H1 (cell line): ENCODE measurements at regions of chr14 and their contacts with region 1.

Region 1: DNA sequence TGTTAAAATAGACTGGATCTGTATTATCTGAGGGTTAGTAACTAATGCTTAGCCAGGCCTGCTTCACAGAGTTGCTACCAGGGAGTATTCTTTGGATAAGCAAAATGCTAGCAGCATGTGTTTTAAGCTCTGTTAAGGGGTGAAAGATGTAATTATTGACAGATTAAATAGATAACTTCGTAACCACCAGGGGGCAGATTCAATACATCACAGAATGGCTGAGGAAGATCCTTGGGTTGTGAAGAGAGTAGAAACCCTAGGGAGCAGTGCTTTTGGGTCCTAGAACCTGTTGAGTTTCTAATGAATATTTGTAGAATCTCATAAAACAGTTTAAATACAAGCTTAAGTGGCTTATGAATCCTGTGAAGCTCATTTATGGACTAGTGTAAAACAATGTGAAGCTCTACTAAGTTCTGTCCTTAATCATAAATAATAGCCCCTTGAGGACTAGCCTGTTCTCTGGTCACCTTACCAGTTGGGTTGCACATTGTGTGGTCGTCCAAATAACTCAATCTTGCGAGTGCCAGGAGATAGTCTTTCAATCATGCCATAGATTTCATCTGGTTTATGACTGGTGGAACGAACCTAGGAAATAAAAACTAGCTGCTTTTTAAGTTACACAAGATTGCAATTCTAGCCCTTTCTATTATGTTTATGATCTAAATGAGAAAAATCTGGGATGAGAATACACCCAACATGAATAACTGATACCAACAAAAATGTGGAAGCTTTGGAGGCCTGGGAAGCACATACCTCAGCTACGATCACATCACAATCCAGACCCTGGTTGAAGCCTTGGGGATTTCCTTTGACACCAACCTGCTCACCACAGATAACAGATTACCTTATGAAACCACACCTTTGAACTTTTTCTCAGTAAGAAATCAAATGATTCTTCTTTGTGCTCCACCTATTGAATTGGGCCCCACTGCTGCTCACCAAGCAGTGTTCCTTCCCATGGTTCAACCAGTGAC is 12.3 kb downstream of the METTL3 start:
- DNase-seq: peak in 1 of 2 experiments; percentile 43
- H3K4me3 ChIP-seq: no peak overlapping the region
- H3K27ac ChIP-seq: peak overlapping the region; percentile 55; the same call in 1 of the 2 replicates
- H3K4me1 ChIP-seq: peaks cover 0 to 2% (median 1%) of the 10 kb centered on the region in 4 experiments; a peak in 2 of 7 replicates
- H3K27me3 ChIP-seq: no peaks in the 10 kb centered on the region
- CTCF ChIP-seq: peak in 2 of 3 experiments; percentile 51 to 56; a peak in 3 of 4 replicates
- EP300 ChIP-seq: no peak
- POLR2A ChIP-seq: no peak
- RAD21 ChIP-seq: peak; percentile 77 to 81

Region 2: DNA sequence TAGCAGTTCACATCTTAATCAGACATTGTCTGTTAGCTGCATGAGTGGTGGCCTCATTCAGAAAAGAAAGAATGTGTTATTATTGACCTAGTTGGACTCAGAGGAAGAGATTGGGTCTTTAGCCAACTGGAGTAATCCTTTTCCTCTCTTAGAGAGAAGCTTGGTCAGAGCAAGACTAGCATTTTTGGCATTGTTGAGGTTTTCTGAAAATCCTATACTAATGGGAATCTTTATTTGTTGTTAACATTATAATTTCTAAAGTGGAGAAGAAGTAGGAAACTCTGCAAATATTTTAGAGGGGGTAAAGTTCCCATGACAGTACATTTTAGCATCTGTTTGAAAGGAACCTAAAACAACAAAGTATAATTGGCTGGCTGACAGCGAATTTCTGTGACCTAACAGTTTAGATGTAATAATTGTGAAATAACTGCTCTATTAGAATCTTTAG is 12.2 kb before region 1 on chr14:
- CTCF ChIA-PET with region 1: interaction called, 19 read pairs
- POLR2A ChIA-PET with region 1: interaction called, 15 read pairs
- DNase-seq: no peak
- H3K4me3 ChIP-seq: no peak overlapping the region
- H3K27ac ChIP-seq: no peak overlapping the region
- H3K4me1 ChIP-seq: no peaks in the 10 kb centered on the region
- H3K27me3 ChIP-seq: no peaks in the 10 kb centered on the region
- CTCF ChIP-seq: no peak
- EP300 ChIP-seq: no peak
- POLR2A ChIP-seq: no peak
- RAD21 ChIP-seq: no peak

Region 3: DNA sequence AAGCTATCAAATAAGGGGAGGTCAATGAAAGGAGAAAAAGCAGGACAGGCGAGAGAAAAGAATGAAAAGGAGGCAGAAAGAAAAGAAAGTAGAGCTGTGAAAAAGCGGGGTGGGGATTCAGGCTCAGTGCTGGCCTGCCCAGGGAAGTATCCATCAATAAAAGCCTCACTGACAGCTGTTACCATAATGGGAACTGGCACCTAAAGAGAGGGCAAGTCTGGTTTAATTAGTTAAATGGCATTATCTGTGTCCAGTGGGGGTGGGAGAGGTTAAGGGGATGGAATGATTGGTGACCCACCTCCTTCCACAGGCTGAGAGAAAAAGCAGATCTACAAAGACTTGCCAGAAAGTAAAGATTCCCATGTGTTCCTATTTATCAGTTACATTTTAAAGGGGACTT is 19.9 kb after region 1 on chr14:
- CTCF ChIA-PET with region 1: interaction called, 22 read pairs
- POLR2A ChIA-PET with region 1: interaction called, 30 read pairs
- DNase-seq: no peak
- H3K4me3 ChIP-seq: no peak overlapping the region
- H3K27ac ChIP-seq: no peak overlapping the region
- H3K4me1 ChIP-seq: peaks cover 0 to 27% (median 11%) of the 10 kb centered on the region in 4 experiments; a peak in 6 of 7 replicates
- H3K27me3 ChIP-seq: no peaks in the 10 kb centered on the region
- CTCF ChIP-seq: no peak
- EP300 ChIP-seq: no peak
- POLR2A ChIP-seq: no peak
- RAD21 ChIP-seq: no peak

Region 4: DNA sequence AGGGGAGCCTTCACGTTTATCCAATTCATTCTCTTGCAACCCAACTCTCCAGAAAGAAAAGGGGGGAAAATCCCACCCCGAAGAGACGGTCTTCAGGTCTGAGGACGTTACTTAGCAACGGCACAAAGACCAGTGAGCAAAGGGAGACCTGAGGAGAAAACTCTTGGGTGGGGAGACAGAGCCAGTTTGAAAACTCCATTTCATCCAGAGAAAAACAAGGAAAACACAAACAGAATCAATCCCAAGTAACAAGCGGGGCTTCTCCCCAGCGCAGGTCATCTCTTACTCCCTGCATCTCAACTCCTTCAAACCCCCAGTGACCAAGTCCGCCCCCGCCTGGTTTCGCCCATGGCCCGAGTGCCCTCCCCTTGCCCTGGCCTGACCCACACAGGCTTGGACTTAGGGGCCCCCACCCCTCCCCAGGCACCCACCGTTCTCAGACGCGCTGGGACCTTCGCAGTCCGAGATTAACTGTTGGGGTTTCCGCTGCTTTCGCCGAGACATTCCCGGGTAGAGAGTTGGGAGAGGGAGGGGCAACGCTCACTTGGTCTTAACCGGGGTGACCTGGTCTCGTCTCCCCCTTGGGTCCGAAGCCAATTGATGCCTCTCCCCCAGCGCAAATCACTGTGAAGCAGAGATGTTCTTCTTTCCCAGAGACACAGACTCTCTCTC is 37.7 kb after region 1 on chr14:
- CTCF ChIA-PET with region 1: interaction called, 59 read pairs
- POLR2A ChIA-PET with region 1: interaction called, 21 read pairs
- DNase-seq: peak in 1 of 2 experiments; percentile 76
- H3K4me3 ChIP-seq: peak overlapping the region; percentile 87 to 96 (median 92)
- H3K27ac ChIP-seq: peak overlapping the region; percentile 91
- H3K4me1 ChIP-seq: peaks cover 0 to 20% (median 15%) of the 10 kb centered on the region in 4 experiments
- H3K27me3 ChIP-seq: no peaks in the 10 kb centered on the region
- CTCF ChIP-seq: no peak
- EP300 ChIP-seq: peak in 1 of 2 experiments; percentile 40; a peak in 1 of 3 replicates
- POLR2A ChIP-seq: peak; percentile 63 to 84
- RAD21 ChIP-seq: no peak

Region 5: DNA sequence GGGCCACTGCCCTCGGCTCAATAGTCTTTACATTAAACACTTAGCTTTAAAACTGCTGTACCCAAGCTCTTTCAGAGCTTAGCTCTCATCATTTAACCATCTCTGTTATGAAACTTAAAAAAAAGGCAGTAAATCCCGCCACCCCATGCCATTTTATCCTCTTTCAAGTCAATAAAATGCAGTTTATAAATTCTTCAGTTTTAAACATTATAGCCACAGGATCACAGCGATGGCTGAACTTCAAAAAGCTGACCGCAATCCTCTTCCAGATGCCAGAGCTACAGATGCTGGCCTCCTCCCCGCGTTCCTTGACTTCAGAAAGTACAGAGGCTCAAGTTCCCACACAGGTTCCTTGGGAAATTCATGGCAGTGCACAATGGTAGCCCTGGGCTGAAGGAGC is 76.8 kb after region 1 on chr14:
- CTCF ChIA-PET with region 1: interaction called, 12 read pairs
- POLR2A ChIA-PET with region 1: no interaction called
- DNase-seq: no peak
- H3K4me3 ChIP-seq: no peak overlapping the region
- H3K27ac ChIP-seq: no peak overlapping the region
- H3K4me1 ChIP-seq: no peaks in the 10 kb centered on the region
- H3K27me3 ChIP-seq: no peaks in the 10 kb centered on the region
- CTCF ChIP-seq: no peak
- EP300 ChIP-seq: no peak
- POLR2A ChIP-seq: no peak
- RAD21 ChIP-seq: no peak